ENCODE measurements at regions of chr1 and their contacts with region 1.

Region 1: GRCh38 chr1:78114034-78114956 is 68.5 kb downstream of the GIPC2 start:
- DNase-seq: peak; percentile 75
- ATAC-seq: peak; percentile 87
- H3K4me3 ChIP-seq: no peak overlapping the region
- H3K27ac ChIP-seq: no peak overlapping the region
- H3K4me1 ChIP-seq: peaks cover 25% of the 10 kb centered on the region
- H3K27me3 ChIP-seq: no peaks in the 10 kb centered on the region
- CTCF ChIP-seq: peak; percentile 80
- EP300 ChIP-seq: no peak
- POLR2A ChIP-seq: no peak
- RAD21 ChIP-seq: peak; percentile 75; the same call in 1 of the 2 replicates

Region 2: GRCh38 chr1:77498918-77499317 is 615.4 kb before region 1 on chr1:
- CTCF ChIA-PET with region 1: no interaction called
- POLR2A ChIA-PET with region 1: no interaction called
- in situ Hi-C with region 1: no loop called
- intact Hi-C with region 1: no loop called
- DNase-seq: no peak
- ATAC-seq: no peak
- H3K4me3 ChIP-seq: no peak overlapping the region
- H3K27ac ChIP-seq: no peak overlapping the region
- H3K4me1 ChIP-seq: no peaks in the 10 kb centered on the region
- H3K27me3 ChIP-seq: peaks cover 0 to 10% of the 10 kb centered on the region in 2 experiments; a peak in 3 of 5 replicates
- CTCF ChIP-seq: no peak
- EP300 ChIP-seq: no peak
- POLR2A ChIP-seq: no peak
- RAD21 ChIP-seq: no peak

Region 3: GRCh38 chr1:77825131-77825709 is 289.1 kb before region 1 on chr1:
- CTCF ChIA-PET with region 1: interaction called, 3 read pairs
- POLR2A ChIA-PET with region 1: no interaction called
- in situ Hi-C with region 1: no loop called
- intact Hi-C with region 1: loop called (anchors 1 kb)
- DNase-seq: peak; percentile 44
- ATAC-seq: peak; percentile 76
- H3K4me3 ChIP-seq: no peak overlapping the region
- H3K27ac ChIP-seq: no peak overlapping the region
- H3K4me1 ChIP-seq: no peaks in the 10 kb centered on the region
- H3K27me3 ChIP-seq: no peaks in the 10 kb centered on the region
- CTCF ChIP-seq: peak; percentile 47
- EP300 ChIP-seq: no peak
- POLR2A ChIP-seq: no peak
- RAD21 ChIP-seq: no peak

Region 4: DNA sequence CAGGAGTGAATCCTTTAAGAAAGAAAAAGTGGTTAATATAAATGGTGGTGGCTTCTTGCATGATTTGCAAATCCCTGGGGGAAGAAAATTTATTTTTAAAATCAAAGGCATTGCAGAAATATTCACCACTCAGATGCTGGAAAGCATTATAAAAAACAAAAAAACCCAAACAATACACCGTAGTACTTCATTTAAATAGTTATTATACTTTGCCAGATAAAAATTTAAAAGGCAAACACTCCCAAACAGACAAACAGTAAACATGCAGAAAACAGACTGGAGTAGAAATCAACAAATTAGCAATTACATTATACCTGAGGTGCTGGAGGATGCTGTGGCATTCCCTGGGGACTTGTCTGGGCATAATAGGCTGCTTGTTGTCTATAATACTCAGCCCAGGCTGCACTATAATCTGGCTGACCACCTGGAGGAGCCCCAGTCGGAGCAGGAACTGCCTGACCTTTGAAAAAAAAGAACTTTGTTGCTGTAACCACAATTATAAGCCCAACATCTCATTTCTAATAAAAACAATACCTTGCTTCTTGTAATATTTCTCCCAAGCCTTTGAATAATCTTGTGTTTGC is 165.4 kb before region 1 on chr1:
- CTCF ChIA-PET with region 1: interaction called, 13 read pairs
- POLR2A ChIA-PET with region 1: no interaction called
- in situ Hi-C with region 1: no loop called
- intact Hi-C with region 1: loop called (anchors 1 kb)
- DNase-seq: peak; percentile 42
- ATAC-seq: peak; percentile 92
- H3K4me3 ChIP-seq: no peak overlapping the region
- H3K27ac ChIP-seq: no peak overlapping the region
- H3K4me1 ChIP-seq: no peaks in the 10 kb centered on the region
- H3K27me3 ChIP-seq: no peaks in the 10 kb centered on the region
- CTCF ChIP-seq: 0 out of 2 replicates have a peak, but pooled peaks have one; percentile 16
- EP300 ChIP-seq: no peak
- POLR2A ChIP-seq: no peak
- RAD21 ChIP-seq: no peak

Region 5: GRCh38 chr1:78045926-78046778 is 68.1 kb before region 1 on chr1 and contains the start of gene GIPC2:
- CTCF ChIA-PET with region 1: no interaction called
- POLR2A ChIA-PET with region 1: no interaction called
- in situ Hi-C with region 1: no loop called
- intact Hi-C with region 1: loop called (anchors 5 kb)
- DNase-seq: peak; percentile 31
- ATAC-seq: peak; percentile 86
- H3K4me3 ChIP-seq: peak within 1 kb of the TSS; percentile 79 to 96 (median 90)
- H3K27ac ChIP-seq: peak within 1 kb of the TSS; percentile 86
- H3K4me1 ChIP-seq: peaks cover 53% of the 10 kb centered on the region
- H3K27me3 ChIP-seq: no peaks in the 10 kb centered on the region; a peak in 1 of 5 replicates
- CTCF ChIP-seq: no peak; the same call in 1 of the 2 replicates
- EP300 ChIP-seq: peak in 1 of 2 experiments; percentile 28; a peak in 2 of 4 replicates
- POLR2A ChIP-seq: peak; percentile 65 to 78
- RAD21 ChIP-seq: no peak; the same call in 1 of the 2 replicates
- total RNA-seq, gene GIPC2: 21.6 and 39.7 TPM in 2 replicates

Region 6: DNA sequence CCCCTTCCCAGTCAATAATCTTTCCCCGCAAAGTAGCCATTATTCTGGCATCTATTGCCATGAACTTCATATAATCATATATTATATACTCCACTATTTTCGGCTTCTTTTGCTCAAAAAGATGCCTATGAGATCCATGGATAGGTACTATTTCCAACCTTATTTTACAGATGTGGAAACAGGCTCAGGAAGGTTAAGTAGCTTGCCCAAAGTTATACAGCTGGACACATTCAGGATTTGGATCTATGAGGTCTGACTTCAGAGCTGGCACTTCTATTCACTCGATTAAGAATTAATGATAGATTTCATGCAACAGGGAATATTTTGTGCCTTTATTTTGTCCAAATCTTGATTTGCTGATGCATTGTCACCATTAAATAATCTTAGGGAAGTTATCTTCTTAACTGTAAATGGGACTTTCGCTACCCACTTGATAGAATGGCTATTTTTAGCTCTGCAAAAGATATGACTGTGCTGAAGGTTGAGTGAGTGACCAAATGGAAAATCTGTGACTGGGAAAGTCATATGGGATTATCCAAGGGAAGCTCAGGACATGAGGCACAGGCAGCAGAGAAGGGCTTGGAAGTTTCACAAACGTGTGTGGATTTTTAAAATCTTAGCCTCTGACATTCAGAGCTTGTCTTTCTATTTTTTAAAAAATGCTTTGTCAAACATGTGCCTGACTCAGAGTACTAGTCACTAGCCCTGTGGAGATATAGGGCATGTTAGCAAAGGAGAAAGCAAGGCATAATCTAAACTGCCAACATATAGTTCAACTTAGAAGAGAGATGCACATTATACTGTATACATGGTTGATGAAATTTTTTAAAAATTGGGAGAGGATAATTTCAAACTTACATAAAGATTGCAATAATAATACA is 32.1 kb before region 1 on chr1:
- CTCF ChIA-PET with region 1: no interaction called
- POLR2A ChIA-PET with region 1: no interaction called
- in situ Hi-C with region 1: no loop called
- intact Hi-C with region 1: no loop called
- DNase-seq: no peak
- ATAC-seq: no peak
- H3K4me3 ChIP-seq: no peak overlapping the region
- H3K27ac ChIP-seq: no peak overlapping the region
- H3K4me1 ChIP-seq: peaks cover 17% of the 10 kb centered on the region
- H3K27me3 ChIP-seq: no peaks in the 10 kb centered on the region
- CTCF ChIP-seq: no peak
- EP300 ChIP-seq: no peak
- POLR2A ChIP-seq: no peak
- RAD21 ChIP-seq: no peak